ENCODE measurements at regions of chr18 and their contacts with region 1.

Region 1: DNA sequence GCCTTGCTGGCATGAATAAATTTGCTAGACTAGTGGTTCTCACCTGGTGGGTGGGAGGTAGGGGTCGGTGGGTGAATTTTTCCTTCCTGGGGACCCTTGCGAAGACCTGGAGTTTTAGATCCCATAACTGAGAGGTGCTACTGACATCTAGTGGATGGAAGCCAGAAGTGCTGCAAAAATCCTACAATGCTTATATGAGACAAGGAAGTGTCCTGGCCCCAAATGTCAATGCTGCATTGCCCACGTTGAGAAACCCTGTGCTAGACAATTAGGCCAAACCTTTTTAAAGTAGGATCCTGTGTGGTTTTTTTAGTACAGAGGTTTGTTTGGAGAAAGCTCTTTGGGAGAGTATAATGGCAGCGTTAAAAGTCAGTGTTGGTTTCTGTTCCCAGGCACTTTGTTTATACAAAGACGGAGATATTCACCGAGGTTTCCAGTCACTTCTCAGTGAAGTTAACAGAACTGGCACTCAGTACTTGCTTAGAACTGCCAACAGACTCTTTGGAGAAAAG is 9.6 kb downstream of the SERPINB8 start:
- DNase-seq: peak; percentile 30 to 73 (median 44)
- H3K4me3 ChIP-seq: no peak overlapping the region
- H3K27ac ChIP-seq: peak overlapping the region in 1 of 5 donors; percentile 26
- H3K4me1 ChIP-seq: peaks cover 0 to 14% of the 10 kb centered on the region in 2 donors
- H3K27me3 ChIP-seq: no peaks in the 10 kb centered on the region
- CTCF ChIP-seq: peak; percentile 47 to 80 (median 70)
- POLR2A ChIP-seq: no peak

Region 2: GRCh38 chr18:63963615-63964256 is 15.7 kb before region 1 on chr18:
- intact Hi-C with region 1: loop called in 1 of 2 experiments (anchors 2 kb)
- DNase-seq: peak; percentile 36 to 80 (median 64)
- H3K4me3 ChIP-seq: no peak overlapping the region
- H3K27ac ChIP-seq: no peak overlapping the region
- H3K4me1 ChIP-seq: peaks cover 0 to 6% of the 10 kb centered on the region in 2 donors
- H3K27me3 ChIP-seq: no peaks in the 10 kb centered on the region
- CTCF ChIP-seq: peak; percentile 66 to 85 (median 74)
- POLR2A ChIP-seq: no peak